GM12878 (cell line): ENCODE measurements at regions of chrX and their contacts with region 1.

Region 1: GRCh38 chrX:119118780-119119395 is 8.7 kb downstream of the KIAA1210 start:
- DNase-seq: no peak
- ATAC-seq: peak; percentile 99
- H3K4me3 ChIP-seq: no peak overlapping the region
- H3K27ac ChIP-seq: no peak overlapping the region
- H3K4me1 ChIP-seq: no peaks in the 10 kb centered on the region
- H3K27me3 ChIP-seq: no peaks in the 10 kb centered on the region; a peak in 2 of 4 replicates
- CTCF ChIP-seq: peak; percentile 75 to 91 (median 90); a peak in 5 of 6 replicates
- EP300 ChIP-seq: no peak
- POLR2A ChIP-seq: no peak
- RAD21 ChIP-seq: peak; percentile 79

Region 2: DNA sequence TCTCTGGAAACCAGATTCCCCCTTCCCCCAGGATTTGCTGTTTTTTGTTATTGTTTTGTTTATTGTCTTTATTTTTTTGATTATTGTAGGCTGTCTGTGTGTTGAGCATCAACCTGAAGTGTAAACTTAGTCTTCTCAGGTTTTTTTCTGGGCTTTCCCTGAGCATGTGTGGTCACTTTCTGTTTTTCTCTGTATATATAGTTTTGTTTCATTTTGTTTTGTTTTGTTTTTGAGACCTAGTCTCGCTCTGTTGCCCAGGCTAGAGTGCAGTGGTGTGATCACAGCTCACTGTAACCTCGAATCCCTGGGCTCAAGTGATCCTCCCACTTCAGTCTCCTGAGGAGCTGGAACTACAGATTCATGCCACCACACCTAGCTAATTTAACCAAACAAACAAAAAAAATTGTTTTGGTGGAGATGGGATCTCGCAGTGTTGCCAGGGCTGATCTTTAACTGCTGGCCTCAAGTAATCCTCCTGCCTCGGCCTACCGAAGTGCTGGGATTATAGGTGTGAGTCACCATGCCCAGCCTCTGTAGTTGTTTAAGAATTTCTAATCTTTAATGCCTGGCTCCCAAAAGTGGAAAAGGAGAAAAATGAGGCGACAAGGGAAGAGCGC is 382.4 kb before region 1 on chrX:
- CTCF ChIA-PET with region 1: no interaction called
- POLR2A ChIA-PET with region 1: no interaction called
- RAD21 ChIA-PET with region 1: no interaction called
- SMC1A ChIA-PET with region 1: no interaction called
- in situ Hi-C with region 1: no loop called
- intact Hi-C with region 1: no loop called
- DNase-seq: no peak
- ATAC-seq: peak; percentile 92
- H3K4me3 ChIP-seq: no peak overlapping the region
- H3K27ac ChIP-seq: no peak overlapping the region
- H3K4me1 ChIP-seq: peaks cover 3% of the 10 kb centered on the region; the same call in 1 of the 2 replicates
- H3K27me3 ChIP-seq: no peaks in the 10 kb centered on the region
- CTCF ChIP-seq: no peak
- EP300 ChIP-seq: no peak
- POLR2A ChIP-seq: no peak
- RAD21 ChIP-seq: no peak

Region 3: GRCh38 chrX:119177278-119177677 is 58.4 kb after region 1 on chrX:
- CTCF ChIA-PET with region 1: no interaction called
- POLR2A ChIA-PET with region 1: no interaction called
- RAD21 ChIA-PET with region 1: no interaction called
- SMC1A ChIA-PET with region 1: no interaction called
- in situ Hi-C with region 1: no loop called
- intact Hi-C with region 1: no loop called
- DNase-seq: no peak
- ATAC-seq: no peak
- H3K4me3 ChIP-seq: no peak overlapping the region
- H3K27ac ChIP-seq: no peak overlapping the region
- H3K4me1 ChIP-seq: no peaks in the 10 kb centered on the region
- H3K27me3 ChIP-seq: no peaks in the 10 kb centered on the region
- CTCF ChIP-seq: no peak
- EP300 ChIP-seq: no peak
- POLR2A ChIP-seq: no peak
- RAD21 ChIP-seq: no peak

Region 4: DNA sequence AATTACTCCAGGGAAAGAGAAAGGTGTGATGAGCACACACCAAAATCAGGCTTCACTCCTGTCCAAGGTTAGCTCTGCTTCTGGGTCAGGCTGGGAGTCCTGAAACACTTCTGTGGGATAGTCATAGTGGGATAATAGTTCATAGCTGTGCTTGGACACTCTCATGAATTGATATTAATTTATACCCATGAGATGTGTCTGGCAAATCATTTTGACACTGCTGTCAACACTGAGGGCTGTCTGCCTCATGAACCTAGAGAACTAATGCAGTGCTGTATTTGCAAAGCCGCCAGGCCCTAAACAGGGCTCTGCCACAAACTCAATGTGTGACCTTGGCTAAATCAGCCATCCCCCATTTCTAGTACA is 92.7 kb after region 1 on chrX:
- CTCF ChIA-PET with region 1: interaction called, 5 read pairs
- POLR2A ChIA-PET with region 1: no interaction called
- RAD21 ChIA-PET with region 1: no interaction called
- SMC1A ChIA-PET with region 1: interaction called, 3 read pairs
- in situ Hi-C with region 1: no loop called
- intact Hi-C with region 1: loop called (anchors 5 kb)
- DNase-seq: no peak
- ATAC-seq: no peak
- H3K4me3 ChIP-seq: no peak overlapping the region
- H3K27ac ChIP-seq: no peak overlapping the region
- H3K4me1 ChIP-seq: no peaks in the 10 kb centered on the region
- H3K27me3 ChIP-seq: no peaks in the 10 kb centered on the region; a peak in 2 of 4 replicates
- CTCF ChIP-seq: no peak
- EP300 ChIP-seq: no peak
- POLR2A ChIP-seq: no peak
- RAD21 ChIP-seq: no peak

Region 5: GRCh38 chrX:119266364-119266995 is 147.6 kb after region 1 on chrX:
- CTCF ChIA-PET with region 1: interaction called, 23 read pairs
- POLR2A ChIA-PET with region 1: no interaction called
- RAD21 ChIA-PET with region 1: interaction called, 3 read pairs
- SMC1A ChIA-PET with region 1: interaction called, 6 read pairs
- in situ Hi-C with region 1: no loop called
- intact Hi-C with region 1: loop called (anchors 1 kb)
- DNase-seq: no peak
- ATAC-seq: peak; percentile 74
- H3K4me3 ChIP-seq: no peak overlapping the region
- H3K27ac ChIP-seq: no peak overlapping the region
- H3K4me1 ChIP-seq: no peaks in the 10 kb centered on the region
- H3K27me3 ChIP-seq: no peaks in the 10 kb centered on the region
- CTCF ChIP-seq: peak; percentile 72 to 85 (median 82)
- EP300 ChIP-seq: no peak
- POLR2A ChIP-seq: no peak
- RAD21 ChIP-seq: peak; percentile 58